Pancreas (tissue), 10 donors: ENCODE measurements at regions of chr16 and their contacts with region 1.

Region 1: DNA sequence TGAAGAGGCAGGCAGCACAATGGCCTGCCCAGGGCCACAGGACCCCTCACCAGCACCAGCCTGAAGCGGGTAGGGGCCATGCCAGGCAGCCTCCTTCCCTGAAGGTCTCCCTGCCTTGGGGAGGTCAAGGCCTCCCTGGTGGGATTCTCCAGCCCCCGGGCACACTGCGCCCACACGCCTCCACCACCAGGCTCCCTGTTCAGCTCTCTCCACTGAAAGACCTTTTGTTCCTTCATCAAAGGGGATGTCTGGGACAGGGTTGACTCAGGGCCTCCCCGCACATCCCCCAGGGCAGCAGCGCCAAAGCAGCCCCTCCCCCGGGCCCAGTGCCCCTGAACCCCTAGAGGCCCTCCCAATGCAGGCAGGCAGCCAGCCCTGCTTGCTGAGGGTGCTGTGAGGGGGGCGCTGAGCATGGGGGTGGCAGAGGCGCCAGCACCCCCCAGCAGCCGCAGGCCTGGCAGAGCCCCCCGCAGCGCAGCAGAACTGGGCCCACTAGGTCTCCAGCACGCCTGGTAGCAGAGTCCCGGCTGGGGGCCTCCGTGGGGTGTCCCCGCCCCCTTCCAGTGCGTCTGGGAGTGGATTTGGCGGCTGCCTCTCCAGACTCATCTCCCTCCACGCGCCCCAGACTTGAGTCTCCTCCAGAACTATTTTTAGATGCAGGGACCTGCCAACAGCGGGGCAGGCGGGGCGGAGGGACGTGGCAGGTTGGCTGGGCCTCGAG is 13.1 kb downstream of the BCAR1 start:
- DNase-seq: peak in 4 of 6 donors; percentile 61 to 88 (median 73)
- ATAC-seq: peak; percentile 11 to 41 (median 32)
- H3K4me3 ChIP-seq: no peak overlapping the region
- H3K27ac ChIP-seq: peak overlapping the region; percentile 2 to 74 (median 38)
- H3K4me1 ChIP-seq: peaks cover 11 to 18% (median 14%) of the 10 kb centered on the region in 3 donors
- H3K27me3 ChIP-seq: no peaks in the 10 kb centered on the region
- CTCF ChIP-seq: no peak

Region 2: DNA sequence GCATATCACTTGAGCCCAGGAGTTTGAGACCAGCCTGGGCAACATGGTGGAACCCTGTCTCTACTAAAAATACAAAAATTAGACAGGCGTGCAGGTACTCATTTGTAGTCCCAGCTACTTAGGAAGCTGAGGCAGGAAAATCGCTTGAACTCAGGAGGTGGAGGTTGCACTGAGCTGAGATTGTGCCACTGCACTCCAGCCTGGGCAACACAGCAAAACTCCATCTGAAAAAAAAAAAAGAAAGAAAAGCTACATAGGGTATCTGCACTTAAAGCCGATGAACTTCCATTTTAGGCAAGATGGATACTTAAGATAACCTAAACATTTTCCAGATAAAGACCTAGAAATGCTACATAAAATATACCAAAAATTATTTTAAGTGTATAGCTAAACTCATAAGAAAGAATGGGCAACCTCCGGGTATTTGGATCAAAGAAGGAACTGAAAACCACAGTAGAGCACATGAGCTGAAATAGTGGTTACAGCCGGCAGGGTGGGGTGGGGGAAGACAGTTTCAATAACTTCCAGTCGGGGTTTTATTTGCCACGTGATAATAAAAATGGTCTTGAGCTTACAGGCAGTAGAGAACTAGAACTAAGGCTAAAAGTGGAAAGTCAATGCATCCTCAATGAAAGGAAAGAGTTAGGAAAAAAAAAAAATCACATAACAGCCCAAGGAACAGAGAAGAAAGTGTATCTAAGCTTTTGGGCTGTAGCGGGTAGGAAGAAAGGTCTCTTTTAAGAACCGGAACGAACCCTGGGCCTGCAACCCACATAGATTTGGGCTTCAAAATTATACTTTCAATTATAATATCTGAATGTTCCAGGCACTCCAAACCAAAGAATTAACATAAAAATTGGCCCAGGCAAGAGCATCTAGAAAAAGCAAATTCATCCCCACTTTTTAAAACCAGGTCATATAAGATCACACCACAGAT is 141.9 kb after region 1 on chr16:
- intact Hi-C with region 1: loop called in 2 of 3 experiments (anchors 5 kb)
- DNase-seq: no peak
- ATAC-seq: peak in 1 of 4 donors; percentile 60
- H3K4me3 ChIP-seq: no peak overlapping the region
- H3K27ac ChIP-seq: no peak overlapping the region
- H3K4me1 ChIP-seq: no peaks in the 10 kb centered on the region
- H3K27me3 ChIP-seq: no peaks in the 10 kb centered on the region
- CTCF ChIP-seq: no peak